Common myeloid progenitor, CD34-positive (primary cell): ENCODE measurements at regions of chr12 and their contacts with region 1.

Region 1: GRCh38 chr12:65908147-65908546 is 83.9 kb downstream of the HMGA2 start:
- DNase-seq: no peak
- H3K4me3 ChIP-seq: no peak overlapping the region
- H3K27ac ChIP-seq: no peak overlapping the region
- H3K4me1 ChIP-seq: peaks cover 2 to 33% (median 4%) of the 10 kb centered on the region in 4 experiments
- H3K27me3 ChIP-seq: no peaks in the 10 kb centered on the region

Region 2: GRCh38 chr12:65845751-65846537 is 62.2 kb before region 1 on chr12:
- CTCF ChIA-PET with region 1: no interaction called
- POLR2A ChIA-PET with region 1: no interaction called
- DNase-seq: no peak
- H3K4me3 ChIP-seq: no peak overlapping the region
- H3K27ac ChIP-seq: no peak overlapping the region
- H3K4me1 ChIP-seq: peaks cover 0 to 11% (median 7%) of the 10 kb centered on the region in 4 experiments
- H3K27me3 ChIP-seq: no peaks in the 10 kb centered on the region

Region 3: DNA sequence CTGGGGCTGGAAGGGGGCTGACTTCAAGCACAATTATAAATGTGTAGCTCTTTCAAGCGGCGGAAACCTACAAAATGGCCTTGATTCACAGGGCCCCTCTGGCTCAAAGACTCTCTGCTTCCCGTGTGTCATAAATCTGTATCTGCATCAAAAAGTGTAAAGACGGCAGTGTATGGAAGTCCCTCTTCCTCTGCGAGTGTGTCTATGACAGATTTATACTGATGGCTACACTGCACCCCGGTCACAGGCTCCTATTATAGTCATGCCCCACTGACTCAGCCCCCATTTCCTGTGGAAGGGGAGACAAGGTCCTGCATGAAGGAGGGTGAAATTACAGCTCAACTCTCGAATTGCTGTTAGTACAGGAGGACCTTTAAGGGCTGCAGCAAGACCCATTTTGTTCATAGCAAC is 15.3 kb before region 1 on chr12:
- CTCF ChIA-PET with region 1: interaction called, 12 read pairs
- POLR2A ChIA-PET with region 1: no interaction called
- DNase-seq: peak; percentile 71 to 93 (median 84)
- H3K4me3 ChIP-seq: peak overlapping the region in 4 of 7 experiments; percentile 14 to 60 (median 42)
- H3K27ac ChIP-seq: peak overlapping the region; percentile 35 to 54
- H3K4me1 ChIP-seq: peaks cover 14 to 58% (median 45%) of the 10 kb centered on the region in 4 experiments
- H3K27me3 ChIP-seq: no peaks in the 10 kb centered on the region